CD8-positive, alpha-beta T cell (primary cell): ENCODE measurements at regions of chr4 and their contacts with region 1.

Region 1: GRCh38 chr4:39227906-39228305 is 45.6 kb downstream of the WDR19 start:
- DNase-seq: no peak
- ATAC-seq: no peak
- H3K4me3 ChIP-seq: no peak overlapping the region
- H3K4me3 Mint-ChIP-seq: no peak overlapping the region
- H3K27ac ChIP-seq: no peak overlapping the region
- H3K27ac Mint-ChIP-seq: no peak overlapping the region
- H3K4me1 ChIP-seq: no peaks in the 10 kb centered on the region
- H3K4me1 Mint-ChIP-seq: no peaks in the 10 kb centered on the region
- H3K27me3 ChIP-seq: no peaks in the 10 kb centered on the region
- H3K27me3 Mint-ChIP-seq: no peaks in the 10 kb centered on the region
- CTCF ChIP-seq: no peak

Region 2: DNA sequence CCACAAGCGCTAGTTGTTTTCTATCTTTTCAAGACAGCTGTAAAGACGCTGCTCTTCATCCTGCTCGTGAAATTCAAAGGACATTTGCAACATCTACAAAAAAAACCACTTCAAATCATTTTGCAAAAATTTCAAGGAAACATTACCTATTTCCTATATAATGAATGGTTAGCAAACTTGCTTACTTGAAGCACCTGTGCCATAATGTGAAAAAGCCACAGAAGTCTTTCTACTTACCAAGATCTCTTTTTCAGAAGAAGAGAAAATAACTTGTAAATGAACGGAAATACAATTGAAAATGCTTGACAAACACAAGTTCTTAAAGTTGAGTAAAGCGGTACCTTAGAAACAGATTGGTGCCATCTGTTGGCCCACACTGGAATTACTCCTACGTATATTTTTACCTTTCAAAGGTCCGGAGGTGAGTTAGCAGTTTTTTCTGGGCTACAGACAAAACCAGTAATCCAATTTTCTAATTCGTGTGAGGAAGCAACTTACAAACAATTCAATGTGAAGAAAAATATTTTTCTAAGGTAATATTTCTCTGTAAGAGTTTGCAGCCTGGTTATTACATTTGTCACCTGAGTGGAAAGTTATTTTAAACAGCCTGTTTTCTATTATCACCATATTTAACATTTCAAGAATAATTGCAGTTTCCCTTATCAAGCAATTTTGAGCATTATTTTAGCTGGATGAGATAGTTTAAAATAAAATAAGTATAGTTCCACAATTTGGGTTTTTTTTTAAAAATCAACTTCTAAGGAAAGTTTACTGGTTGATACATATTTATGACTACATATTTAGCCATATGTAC is 371.2 kb before region 1 on chr4 and contains the start of gene TLR6:
- CTCF ChIA-PET with region 1: no interaction called
- POLR2A ChIA-PET with region 1: no interaction called
- intact Hi-C with region 1: no loop called
- DNase-seq: peak; percentile 35 to 86 (median 64)
- ATAC-seq: peak; percentile 85
- H3K4me3 ChIP-seq: peak within 1 kb of the TSS; percentile 31 to 57
- H3K4me3 Mint-ChIP-seq: peak within 1 kb of the TSS; percentile 74
- H3K27ac ChIP-seq: peak within 1 kb of the TSS; percentile 32 to 50
- H3K27ac Mint-ChIP-seq: peak within 1 kb of the TSS; percentile 62
- H3K4me1 ChIP-seq: peaks cover 17% of the 10 kb centered on the region
- H3K4me1 Mint-ChIP-seq: peaks cover 38% of the 10 kb centered on the region
- H3K27me3 ChIP-seq: no peaks in the 10 kb centered on the region
- H3K27me3 Mint-ChIP-seq: no peaks in the 10 kb centered on the region
- CTCF ChIP-seq: peak; percentile 93
- total RNA-seq, gene TLR6: 0.31 to 0.60 TPM

Region 3: DNA sequence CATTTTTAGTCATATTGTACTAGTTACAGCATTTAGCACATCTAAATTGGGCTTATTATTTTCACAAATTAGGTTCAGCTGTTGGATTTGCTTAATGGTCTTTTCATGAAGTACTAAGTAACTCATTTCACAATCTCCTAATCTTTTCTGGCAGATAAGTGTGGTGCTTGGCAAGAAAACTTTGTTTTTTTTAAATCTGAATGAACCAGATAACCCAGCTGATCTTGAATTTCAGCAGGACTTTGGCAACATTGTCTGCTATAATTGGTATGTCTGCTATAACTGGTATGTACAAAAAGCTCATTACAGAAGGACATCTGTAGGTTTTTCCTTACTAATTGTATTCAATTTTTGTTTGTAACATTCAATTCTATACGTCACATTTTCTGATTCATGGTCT is 22.9 kb before region 1 on chr4:
- CTCF ChIA-PET with region 1: no interaction called
- POLR2A ChIA-PET with region 1: no interaction called
- intact Hi-C with region 1: loop called in 1 of 2 experiments (anchors 1 kb)
- DNase-seq: no peak
- ATAC-seq: no peak
- H3K4me3 ChIP-seq: no peak overlapping the region
- H3K4me3 Mint-ChIP-seq: no peak overlapping the region
- H3K27ac ChIP-seq: no peak overlapping the region
- H3K27ac Mint-ChIP-seq: no peak overlapping the region
- H3K4me1 ChIP-seq: no peaks in the 10 kb centered on the region
- H3K4me1 Mint-ChIP-seq: no peaks in the 10 kb centered on the region
- H3K27me3 ChIP-seq: no peaks in the 10 kb centered on the region
- H3K27me3 Mint-ChIP-seq: no peaks in the 10 kb centered on the region
- CTCF ChIP-seq: no peak

Region 4: GRCh38 chr4:39255266-39255665 is 27.4 kb after region 1 on chr4:
- CTCF ChIA-PET with region 1: no interaction called
- POLR2A ChIA-PET with region 1: no interaction called
- intact Hi-C with region 1: loop called in 1 of 2 experiments (anchors 5 kb)
- DNase-seq: no peak
- ATAC-seq: no peak
- H3K4me3 ChIP-seq: no peak overlapping the region
- H3K4me3 Mint-ChIP-seq: no peak overlapping the region
- H3K27ac ChIP-seq: no peak overlapping the region
- H3K27ac Mint-ChIP-seq: no peak overlapping the region
- H3K4me1 ChIP-seq: no peaks in the 10 kb centered on the region
- H3K4me1 Mint-ChIP-seq: no peaks in the 10 kb centered on the region
- H3K27me3 ChIP-seq: no peaks in the 10 kb centered on the region
- H3K27me3 Mint-ChIP-seq: no peaks in the 10 kb centered on the region
- CTCF ChIP-seq: no peak

Region 5: DNA sequence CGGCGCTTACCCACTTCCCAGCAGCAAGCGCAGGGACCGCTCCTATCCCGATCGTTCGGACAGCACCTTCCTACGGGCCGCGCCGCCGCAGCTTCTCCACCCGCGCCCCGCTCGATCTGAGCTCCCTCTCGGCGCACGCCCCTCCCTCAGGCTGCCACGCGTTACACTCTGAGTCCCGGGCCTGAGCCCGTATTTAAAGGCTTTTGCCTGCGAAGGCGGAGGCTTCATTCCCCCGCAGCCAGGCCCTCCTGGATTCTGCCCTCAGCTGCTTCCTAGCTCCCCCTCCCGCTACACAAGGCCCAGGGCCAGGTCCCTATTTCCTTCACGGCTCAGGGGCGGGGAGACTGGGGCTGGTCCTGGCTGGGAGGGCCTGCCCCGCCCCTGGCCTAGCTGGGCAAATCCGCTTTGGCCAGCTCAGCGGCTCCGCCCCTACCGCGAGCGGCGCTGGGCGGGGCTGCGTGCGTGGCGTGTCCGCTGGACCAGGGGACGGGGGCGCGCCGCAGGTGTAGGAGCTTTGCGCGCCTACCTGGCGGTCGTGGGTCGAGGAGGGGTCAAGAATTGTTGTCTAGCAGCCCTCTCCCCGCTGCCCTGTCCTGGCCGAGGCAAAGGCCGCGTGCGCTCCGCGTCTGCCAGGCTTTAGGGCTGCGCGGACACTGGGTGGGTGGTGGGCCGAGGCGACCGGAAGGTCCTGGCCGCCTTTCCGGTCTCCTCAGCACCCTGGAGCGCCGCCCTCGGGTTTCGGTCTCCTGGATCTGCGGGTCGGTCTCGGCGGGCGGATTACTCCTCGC is 299.6 kb after region 1 on chr4 and contains the start of gene UGDH:
- CTCF ChIA-PET with region 1: no interaction called
- POLR2A ChIA-PET with region 1: no interaction called
- intact Hi-C with region 1: no loop called
- DNase-seq: peak; percentile 81 to 96 (median 90)
- ATAC-seq: peak; percentile 98
- H3K4me3 ChIP-seq: peak within 1 kb of the TSS; percentile 87 to 89
- H3K4me3 Mint-ChIP-seq: peak within 1 kb of the TSS; percentile 96
- H3K27ac ChIP-seq: peak within 1 kb of the TSS; percentile 68 to 74
- H3K27ac Mint-ChIP-seq: peak within 1 kb of the TSS; percentile 93
- H3K4me1 ChIP-seq: peaks cover 17% of the 10 kb centered on the region
- H3K4me1 Mint-ChIP-seq: peaks cover 24% of the 10 kb centered on the region
- H3K27me3 ChIP-seq: no peaks in the 10 kb centered on the region
- H3K27me3 Mint-ChIP-seq: no peaks in the 10 kb centered on the region
- CTCF ChIP-seq: no peak
- total RNA-seq, gene UGDH: 2.6 to 3.6 TPM